B cell (primary cell): ENCODE measurements at regions of chr1 and their contacts with region 1.

Region 1: GRCh38 chr1:203340112-203340804 is 10.7 kb downstream of the FMOD start:
- DNase-seq: peak; percentile 82
- ATAC-seq: peak; percentile 77
- H3K4me3 ChIP-seq: no peak overlapping the region
- H3K4me3 Mint-ChIP-seq: no peak overlapping the region
- H3K27ac ChIP-seq: no peak overlapping the region
- H3K27ac Mint-ChIP-seq: peak overlapping the region; percentile 50
- H3K4me1 ChIP-seq: peaks cover 16 to 25% of the 10 kb centered on the region in 2 donors
- H3K4me1 Mint-ChIP-seq: peaks cover 24% of the 10 kb centered on the region
- H3K27me3 ChIP-seq: peaks cover 0 to 13% (median 1%) of the 10 kb centered on the region in 4 experiments
- H3K27me3 Mint-ChIP-seq: peaks cover 28% of the 10 kb centered on the region
- CTCF ChIP-seq: peak; percentile 95

Region 2: GRCh38 chr1:203273206-203273868 is 66.9 kb before region 1 on chr1:
- CTCF ChIA-PET with region 1: interaction called, 1,776 read pairs
- POLR2A ChIA-PET with region 1: interaction called, 5 read pairs
- intact Hi-C with region 1: loop called (anchors 1 kb)
- DNase-seq: peak; percentile 95
- ATAC-seq: peak; percentile 78
- H3K4me3 ChIP-seq: peak overlapping the region; percentile 45 to 83 (median 61)
- H3K4me3 Mint-ChIP-seq: peak overlapping the region; percentile 86
- H3K27ac ChIP-seq: peak overlapping the region; percentile 62 to 84
- H3K27ac Mint-ChIP-seq: peak overlapping the region; percentile 86
- H3K4me1 ChIP-seq: peaks cover 72 to 77% of the 10 kb centered on the region in 2 donors
- H3K4me1 Mint-ChIP-seq: peaks cover 67% of the 10 kb centered on the region
- H3K27me3 ChIP-seq: no peaks in the 10 kb centered on the region
- H3K27me3 Mint-ChIP-seq: no peaks in the 10 kb centered on the region
- CTCF ChIP-seq: peak; percentile 99

Region 3: GRCh38 chr1:203320591-203321272 is 19.5 kb before region 1 on chr1:
- CTCF ChIA-PET with region 1: interaction called, 227 read pairs
- POLR2A ChIA-PET with region 1: interaction called, 55 read pairs
- intact Hi-C with region 1: no loop called
- DNase-seq: peak; percentile 90
- ATAC-seq: peak; percentile 69
- H3K4me3 ChIP-seq: peak overlapping the region in 3 of 5 experiments; percentile 3 to 46 (median 25)
- H3K4me3 Mint-ChIP-seq: peak overlapping the region; percentile 79
- H3K27ac ChIP-seq: peak overlapping the region; percentile 96 to 97
- H3K27ac Mint-ChIP-seq: peak overlapping the region; percentile 98
- H3K4me1 ChIP-seq: peaks cover 77 to 92% of the 10 kb centered on the region in 2 donors
- H3K4me1 Mint-ChIP-seq: peaks cover 90% of the 10 kb centered on the region
- H3K27me3 ChIP-seq: no peaks in the 10 kb centered on the region
- H3K27me3 Mint-ChIP-seq: no peaks in the 10 kb centered on the region
- CTCF ChIP-seq: no peak

Region 4: GRCh38 chr1:203361945-203362719 is 21.9 kb after region 1 on chr1:
- CTCF ChIA-PET with region 1: interaction called, 83 read pairs
- POLR2A ChIA-PET with region 1: no interaction called
- intact Hi-C with region 1: no loop called
- DNase-seq: peak; percentile 72
- ATAC-seq: peak; percentile 93
- H3K4me3 ChIP-seq: no peak overlapping the region
- H3K4me3 Mint-ChIP-seq: no peak overlapping the region
- H3K27ac ChIP-seq: no peak overlapping the region
- H3K27ac Mint-ChIP-seq: peak overlapping the region; percentile 41
- H3K4me1 ChIP-seq: peaks cover 18 to 19% of the 10 kb centered on the region in 2 donors
- H3K4me1 Mint-ChIP-seq: peaks cover 20% of the 10 kb centered on the region
- H3K27me3 ChIP-seq: peaks cover 0 to 6% (median 0%) of the 10 kb centered on the region in 4 experiments
- H3K27me3 Mint-ChIP-seq: peaks cover 19% of the 10 kb centered on the region
- CTCF ChIP-seq: no peak

Region 5: GRCh38 chr1:203451836-203452784 is 111.9 kb after region 1 on chr1:
- CTCF ChIA-PET with region 1: interaction called, 11 read pairs
- POLR2A ChIA-PET with region 1: no interaction called
- intact Hi-C with region 1: no loop called
- DNase-seq: no peak
- ATAC-seq: no peak
- H3K4me3 ChIP-seq: no peak overlapping the region
- H3K4me3 Mint-ChIP-seq: no peak overlapping the region
- H3K27ac ChIP-seq: no peak overlapping the region
- H3K27ac Mint-ChIP-seq: no peak overlapping the region
- H3K4me1 ChIP-seq: peaks cover 8 to 14% of the 10 kb centered on the region in 2 donors
- H3K4me1 Mint-ChIP-seq: peaks cover 12% of the 10 kb centered on the region
- H3K27me3 ChIP-seq: peaks cover 0 to 8% (median 0%) of the 10 kb centered on the region in 4 experiments
- H3K27me3 Mint-ChIP-seq: peaks cover 13% of the 10 kb centered on the region
- CTCF ChIP-seq: no peak

Region 6: DNA sequence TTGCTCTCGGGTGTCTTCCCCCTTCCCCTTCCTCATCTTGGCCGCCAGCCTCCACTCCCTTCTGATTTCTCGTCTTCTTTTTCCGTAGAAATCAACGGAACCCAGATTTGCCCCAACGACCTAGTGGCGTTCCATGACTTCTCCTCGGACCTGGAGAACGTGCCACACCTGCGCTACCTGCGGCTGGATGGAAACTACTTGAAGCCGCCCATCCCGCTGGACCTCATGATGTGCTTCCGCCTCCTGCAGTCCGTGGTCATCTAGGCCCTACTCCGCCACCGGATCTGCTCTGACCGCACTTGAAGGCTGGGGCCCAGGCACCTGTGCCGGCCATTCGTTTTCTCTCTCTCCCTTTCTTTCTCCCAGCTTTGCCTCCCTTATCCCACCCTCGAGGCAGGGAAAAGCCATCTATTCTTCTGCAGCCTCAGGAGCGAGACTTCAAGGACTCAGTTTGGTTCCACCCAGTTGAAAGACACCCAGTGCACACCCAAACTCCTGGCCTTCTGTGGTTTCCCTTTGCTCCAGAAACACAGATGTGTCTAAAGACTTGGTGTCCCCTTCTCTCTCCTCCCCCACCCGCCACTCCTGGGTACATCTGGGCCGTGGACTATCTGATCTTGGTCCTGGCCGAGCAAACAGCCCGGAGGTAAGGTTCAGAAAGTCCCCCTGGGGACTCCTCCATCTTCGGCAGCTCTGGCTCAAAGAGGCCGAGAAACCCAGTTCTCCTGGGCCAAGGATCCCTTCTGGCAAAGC is 146.5 kb after region 1 on chr1:
- CTCF ChIA-PET with region 1: interaction called, 511 read pairs
- POLR2A ChIA-PET with region 1: no interaction called
- intact Hi-C with region 1: loop called (anchors 1 kb)
- DNase-seq: no peak
- ATAC-seq: no peak
- H3K4me3 ChIP-seq: no peak overlapping the region
- H3K4me3 Mint-ChIP-seq: peak overlapping the region; percentile 90
- H3K27ac ChIP-seq: no peak overlapping the region
- H3K27ac Mint-ChIP-seq: peak overlapping the region; percentile 53
- H3K4me1 ChIP-seq: peaks cover 0 to 10% of the 10 kb centered on the region in 2 donors
- H3K4me1 Mint-ChIP-seq: peaks cover 9% of the 10 kb centered on the region
- H3K27me3 ChIP-seq: peaks cover 0 to 2% (median 0%) of the 10 kb centered on the region in 4 experiments
- H3K27me3 Mint-ChIP-seq: peaks cover 8% of the 10 kb centered on the region
- CTCF ChIP-seq: no peak

Region 7: DNA sequence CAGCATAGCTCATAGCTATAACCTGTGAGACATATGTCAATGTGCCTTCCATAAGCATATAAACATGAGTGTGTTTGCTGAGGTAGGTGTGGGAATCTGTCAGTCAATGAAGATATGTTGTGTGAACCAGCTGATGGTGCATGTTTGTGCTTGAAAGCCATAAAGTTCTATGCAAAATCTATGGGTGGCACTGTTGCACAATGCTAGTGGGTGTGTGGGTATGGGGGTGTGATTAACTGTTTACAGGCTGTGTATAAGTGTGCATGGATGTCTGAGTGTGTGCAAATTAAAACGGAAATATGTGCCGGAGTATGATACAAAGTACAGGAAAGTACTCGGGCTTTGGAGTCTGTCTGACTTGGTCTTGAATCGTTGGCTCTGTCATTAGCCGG is 285.4 kb after region 1 on chr1:
- CTCF ChIA-PET with region 1: interaction called, 10 read pairs
- POLR2A ChIA-PET with region 1: no interaction called
- intact Hi-C with region 1: no loop called
- DNase-seq: peak; percentile 76
- ATAC-seq: peak; percentile 55
- H3K4me3 ChIP-seq: peak overlapping the region in 3 of 5 experiments; percentile 61 to 71 (median 67)
- H3K4me3 Mint-ChIP-seq: peak overlapping the region; percentile 95
- H3K27ac ChIP-seq: peak overlapping the region in 1 of 2 donors; percentile 73
- H3K27ac Mint-ChIP-seq: peak overlapping the region; percentile 73
- H3K4me1 ChIP-seq: peaks cover 39 to 50% of the 10 kb centered on the region in 2 donors
- H3K4me1 Mint-ChIP-seq: peaks cover 45% of the 10 kb centered on the region
- H3K27me3 ChIP-seq: no peaks in the 10 kb centered on the region
- H3K27me3 Mint-ChIP-seq: peaks cover 5% of the 10 kb centered on the region
- CTCF ChIP-seq: peak; percentile 70

Region 8: GRCh38 chr1:203765029-203765837 is 425.0 kb after region 1 on chr1 and contains the start of gene LAX1:
- CTCF ChIA-PET with region 1: no interaction called
- POLR2A ChIA-PET with region 1: no interaction called
- intact Hi-C with region 1: no loop called
- DNase-seq: peak; percentile 57
- ATAC-seq: peak; percentile 83
- H3K4me3 ChIP-seq: peak within 1 kb of the TSS; percentile 54 to 72 (median 62)
- H3K4me3 Mint-ChIP-seq: peak within 1 kb of the TSS; percentile 95
- H3K27ac ChIP-seq: peak within 1 kb of the TSS; percentile 79 to 82
- H3K27ac Mint-ChIP-seq: peak within 1 kb of the TSS; percentile 99
- H3K4me1 ChIP-seq: peaks cover 14 to 36% of the 10 kb centered on the region in 2 donors
- H3K4me1 Mint-ChIP-seq: peaks cover 36% of the 10 kb centered on the region
- H3K27me3 ChIP-seq: no peaks in the 10 kb centered on the region
- H3K27me3 Mint-ChIP-seq: no peaks in the 10 kb centered on the region
- CTCF ChIP-seq: no peak
- total RNA-seq, gene LAX1: 20.5 and 23.5 TPM in 2 replicates

Region 9: DNA sequence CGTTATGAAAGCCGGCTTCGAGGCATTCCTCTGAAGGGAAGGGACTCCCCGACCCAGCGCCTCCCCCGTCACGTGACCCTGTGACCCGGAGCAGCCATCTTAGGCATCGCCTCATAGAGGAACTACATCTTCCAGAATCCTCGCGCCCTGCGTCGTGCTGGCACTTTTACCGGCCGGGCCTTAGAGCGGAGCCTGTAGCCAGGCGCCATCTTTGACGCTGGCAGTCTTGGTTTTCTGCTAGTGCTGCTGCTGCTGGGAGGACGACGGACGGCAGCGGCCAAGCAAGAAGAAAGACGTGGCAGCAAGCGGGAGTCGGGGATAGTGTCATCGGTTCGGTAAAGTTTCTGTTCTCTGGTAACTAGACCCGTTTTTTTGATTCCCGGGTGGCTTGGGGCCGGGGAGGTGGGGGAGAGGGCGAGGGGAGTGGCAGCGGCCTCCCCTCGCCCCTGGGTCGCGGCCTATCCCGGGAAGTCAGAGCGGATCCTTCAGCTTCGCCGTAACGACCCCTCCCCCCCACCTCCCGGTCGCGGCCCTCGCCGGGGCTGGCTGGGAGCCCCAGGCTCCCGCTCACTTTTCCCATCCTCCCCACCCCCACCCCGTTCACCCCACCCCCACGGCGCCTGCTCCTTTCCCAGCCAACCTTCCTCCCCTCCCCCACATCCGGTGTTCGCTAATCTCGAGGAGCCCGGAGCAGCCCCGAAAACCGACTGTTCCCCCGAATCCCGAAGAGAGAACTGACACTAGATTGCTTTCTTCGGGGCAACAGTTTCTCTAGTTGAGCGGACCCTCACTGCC is 455.4 kb after region 1 on chr1 and contains the starts of genes ZBED6 and ZC3H11A:
- CTCF ChIA-PET with region 1: no interaction called
- POLR2A ChIA-PET with region 1: no interaction called
- intact Hi-C with region 1: no loop called
- DNase-seq: peak; percentile 99
- ATAC-seq: peak; percentile 98
- H3K4me3 ChIP-seq: peak within 1 kb of the TSS; percentile 62 to 86 (median 78)
- H3K4me3 Mint-ChIP-seq: peak within 1 kb of the TSS; percentile 88
- H3K27ac ChIP-seq: peak within 1 kb of the TSS; percentile 85 to 94
- H3K27ac Mint-ChIP-seq: peak within 1 kb of the TSS; percentile 97
- H3K4me1 ChIP-seq: peaks cover 37% of the 10 kb centered on the region in 2 donors
- H3K4me1 Mint-ChIP-seq: peaks cover 49% of the 10 kb centered on the region
- H3K27me3 ChIP-seq: no peaks in the 10 kb centered on the region
- H3K27me3 Mint-ChIP-seq: no peaks in the 10 kb centered on the region
- CTCF ChIP-seq: no peak
- total RNA-seq, gene ZBED6: 39.7 and 40.0 TPM in 2 replicates
- total RNA-seq, gene ZC3H11A: 117 and 130 TPM in 2 replicates